Tibial artery (tissue), 4 donors: ENCODE measurements at regions of chr16 and their contacts with region 1.

Region 1: DNA sequence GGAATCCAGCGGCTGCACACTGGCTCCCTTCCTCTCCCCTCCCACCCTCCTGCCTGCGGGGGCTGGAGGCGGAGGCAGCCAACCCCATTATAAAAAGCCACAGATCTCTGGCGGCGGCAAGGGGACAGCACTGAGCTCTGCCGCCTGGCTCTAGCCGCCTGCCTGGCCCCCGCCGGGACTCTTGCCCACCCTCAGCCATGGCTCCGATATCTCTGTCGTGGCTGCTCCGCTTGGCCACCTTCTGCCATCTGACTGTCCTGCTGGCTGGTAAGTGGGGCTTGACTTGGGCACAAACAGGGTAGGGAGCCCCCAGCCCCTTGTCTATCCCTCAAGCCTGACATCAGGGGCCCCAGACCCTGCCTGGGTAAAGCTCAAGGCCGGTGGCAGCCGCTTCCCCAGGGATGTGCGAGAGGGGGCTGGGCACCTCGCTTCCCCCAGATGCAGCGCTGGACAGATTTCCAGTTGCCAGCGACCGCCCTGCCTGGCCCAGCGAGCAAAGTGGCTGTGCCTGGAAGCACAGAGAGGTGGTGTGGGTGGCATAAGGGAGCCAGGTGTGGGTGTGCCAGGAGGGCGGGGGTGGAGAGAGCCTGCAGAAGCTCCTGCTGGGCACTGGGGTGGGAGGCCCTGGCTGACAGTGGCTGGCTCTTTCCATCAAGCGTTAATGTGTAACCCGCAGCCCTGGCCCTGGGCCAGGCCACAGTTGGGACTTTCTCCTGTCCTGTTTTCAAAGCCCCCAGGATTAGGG is at the start of gene CX3CL1:
- DNase-seq: peak; percentile 85 to 96
- H3K4me3 ChIP-seq: peak within 1 kb of the TSS; percentile 65 to 78
- H3K27ac ChIP-seq: peak within 1 kb of the TSS; percentile 90 to 96
- H3K4me1 ChIP-seq: peaks cover 0 to 49% (median 46%) of the 10 kb centered on the region in 4 donors
- H3K27me3 ChIP-seq: no peaks in the 10 kb centered on the region
- CTCF ChIP-seq: peak; percentile 30 to 38

Region 2: DNA sequence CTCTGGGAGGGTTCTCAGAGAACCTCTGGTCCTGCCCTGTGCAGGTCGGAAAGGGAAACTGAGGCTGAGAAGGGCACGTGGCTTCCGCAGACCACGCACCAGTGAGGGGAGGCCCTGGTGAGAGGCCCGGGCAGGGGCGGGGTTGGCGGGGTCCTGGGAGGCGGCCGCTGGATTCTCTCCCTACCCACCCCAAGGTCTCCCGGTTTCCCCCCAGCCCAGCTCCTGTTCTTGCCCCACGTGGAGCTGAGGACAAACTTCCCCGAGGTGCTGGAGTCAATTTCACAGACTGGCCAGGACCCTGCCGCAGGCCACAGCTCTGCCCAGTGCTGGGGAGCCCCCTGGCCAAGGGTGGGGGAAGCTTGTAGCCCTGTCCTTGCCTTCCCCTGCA is 43.6 kb after region 1 on chr16:
- intact Hi-C with region 1: loop called (anchors 5 kb)
- DNase-seq: no peak
- H3K4me3 ChIP-seq: no peak overlapping the region
- H3K27ac ChIP-seq: peak overlapping the region; percentile 55 to 56
- H3K4me1 ChIP-seq: peaks cover 7 to 31% (median 25%) of the 10 kb centered on the region in 4 donors
- H3K27me3 ChIP-seq: no peaks in the 10 kb centered on the region
- CTCF ChIP-seq: no peak